ENCODE measurements at regions of chr7 and their contacts with region 1.

Region 1: DNA sequence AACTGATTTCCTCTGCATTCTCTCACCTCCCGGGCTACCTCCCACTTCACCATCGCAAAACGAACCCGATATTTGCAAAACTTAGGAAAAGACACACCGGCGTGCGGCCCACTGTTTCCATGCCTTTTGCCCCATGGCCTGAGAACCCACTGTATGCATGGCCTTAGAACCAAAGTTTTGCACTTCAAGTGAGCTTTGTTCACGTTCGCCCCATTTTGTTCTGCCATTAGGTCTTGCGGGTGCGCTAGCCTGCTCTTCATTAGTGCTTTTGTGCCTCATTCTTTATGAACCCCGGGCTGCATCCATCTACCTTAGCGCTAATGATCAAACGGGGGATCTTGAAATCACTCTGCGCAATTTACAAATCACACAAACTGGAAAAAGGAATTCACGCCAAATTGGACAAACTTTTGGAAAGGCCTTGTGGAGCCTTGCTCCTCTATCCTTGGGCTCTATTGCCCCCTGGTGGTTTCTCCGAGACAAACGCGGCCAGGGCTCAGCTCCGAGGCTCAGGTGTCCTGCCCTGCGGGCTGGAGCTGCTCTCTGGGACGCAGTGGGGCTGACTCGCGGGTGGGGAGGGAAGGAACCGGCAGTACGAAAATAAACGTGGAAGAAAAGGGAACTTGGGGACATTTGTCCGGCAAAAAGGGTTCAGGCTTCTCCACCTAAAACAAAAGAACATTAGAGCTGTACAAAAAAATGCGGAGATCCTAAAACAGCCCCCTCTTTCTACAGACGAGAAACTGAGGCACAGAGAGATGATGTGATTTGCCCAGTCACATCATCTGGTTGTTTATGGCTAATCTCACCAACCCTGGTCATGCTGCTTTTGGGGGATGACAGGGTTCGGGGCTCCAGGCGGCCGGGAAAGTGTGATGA is 300.4 kb upstream of the NFE2L3 start:
- ATAC-seq: peak; percentile 12 to 51 (median 44)
- H3K4me3 ChIP-seq: peak overlapping the region in 3 of 5 donors; percentile 29 to 35 (median 31)
- H3K27ac ChIP-seq: peak overlapping the region in 1 of 2 donors; percentile 40
- H3K4me1 ChIP-seq: peaks cover 24 to 56% of the 10 kb centered on the region in 2 donors

Region 2: DNA sequence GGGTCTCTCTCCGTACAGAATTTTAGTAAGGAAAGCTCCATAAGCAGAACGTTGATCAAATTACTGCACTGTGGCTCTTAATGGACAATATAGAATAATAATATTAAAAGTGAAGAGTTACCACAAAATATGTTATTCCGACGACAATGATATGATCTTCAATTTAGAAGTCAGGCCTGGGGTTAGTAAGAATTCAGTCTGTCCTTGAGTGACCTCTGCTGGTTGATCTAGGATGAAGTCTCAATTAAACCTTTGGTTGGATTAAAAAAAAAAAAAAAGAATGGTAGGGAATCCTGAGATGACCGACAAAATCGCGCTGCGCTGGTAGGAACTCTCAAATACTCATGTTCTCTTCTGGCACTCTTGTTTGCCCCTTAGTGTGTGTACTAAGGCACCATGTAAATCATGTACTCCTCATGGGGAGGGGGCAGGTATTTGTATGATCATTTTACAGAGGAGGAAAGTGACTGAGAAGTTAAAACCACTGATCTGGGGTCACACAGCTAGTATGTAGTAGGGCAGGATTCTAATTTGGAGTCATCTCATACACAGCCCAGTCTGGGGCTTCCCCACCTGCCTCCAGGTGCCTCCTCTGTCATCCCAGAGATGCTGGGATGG is 462.0 kb before region 1 on chr7:
- in situ Hi-C with region 1: loop called in 6 of 9 experiments (anchors 10 to 25 kb)
- ATAC-seq: peak; percentile 49 to 72 (median 56)
- H3K4me3 ChIP-seq: no peak overlapping the region
- H3K27ac ChIP-seq: no peak overlapping the region
- H3K4me1 ChIP-seq: peaks cover 0 to 15% of the 10 kb centered on the region in 2 donors

Region 3: GRCh38 chr7:25565949-25566348 is 285.6 kb before region 1 on chr7:
- in situ Hi-C with region 1: loop called in 3 of 9 experiments (anchors 10 kb)
- ATAC-seq: no peak
- H3K4me3 ChIP-seq: no peak overlapping the region
- H3K27ac ChIP-seq: no peak overlapping the region
- H3K4me1 ChIP-seq: peaks cover 0 to 9% of the 10 kb centered on the region in 2 donors

Region 4: GRCh38 chr7:25586513-25586912 is 265.1 kb before region 1 on chr7:
- in situ Hi-C with region 1: loop called in 2 of 9 experiments (anchors 10 to 25 kb)
- ATAC-seq: no peak
- H3K4me3 ChIP-seq: no peak overlapping the region
- H3K27ac ChIP-seq: no peak overlapping the region
- H3K4me1 ChIP-seq: peaks cover 0 to 11% of the 10 kb centered on the region in 2 donors

Measured in motor neuron (in vitro differentiated cells).